ENCODE measurements at regions of chr2 and their contacts with region 1.

Region 1: GRCh38 chr2:16525265-16525887 is 140.3 kb downstream of the CYRIA start:
- DNase-seq: peak; percentile 37
- H3K4me3 ChIP-seq: peak overlapping the region in 1 of 2 experiments; percentile 40; a peak in 1 of 4 replicates
- H3K27ac ChIP-seq: no peak overlapping the region
- H3K4me1 ChIP-seq: peaks cover 0 to 22% of the 10 kb centered on the region in 2 experiments; a peak in 2 of 4 replicates
- H3K27me3 ChIP-seq: no peaks in the 10 kb centered on the region
- CTCF ChIP-seq: peak; percentile 44
- EP300 ChIP-seq: no peak
- RAD21 ChIP-seq: peak; percentile 59

Region 2: GRCh38 chr2:16487686-16488085 is 37.7 kb before region 1 on chr2:
- CTCF ChIA-PET with region 1: no interaction called
- POLR2A ChIA-PET with region 1: no interaction called
- DNase-seq: peak; percentile 73
- H3K4me3 ChIP-seq: no peak overlapping the region
- H3K27ac ChIP-seq: no peak overlapping the region
- H3K4me1 ChIP-seq: no peaks in the 10 kb centered on the region
- H3K27me3 ChIP-seq: no peaks in the 10 kb centered on the region
- CTCF ChIP-seq: no peak; the same call in 1 of the 2 replicates
- EP300 ChIP-seq: no peak
- RAD21 ChIP-seq: peak; percentile 99

Region 3: GRCh38 chr2:16537347-16537746 is 12.0 kb after region 1 on chr2:
- CTCF ChIA-PET with region 1: interaction called, 14 read pairs
- POLR2A ChIA-PET with region 1: interaction called, 3 read pairs
- DNase-seq: no peak
- H3K4me3 ChIP-seq: no peak overlapping the region
- H3K27ac ChIP-seq: no peak overlapping the region
- H3K4me1 ChIP-seq: peaks cover 0 to 2% of the 10 kb centered on the region in 2 experiments; a peak in 2 of 4 replicates
- H3K27me3 ChIP-seq: no peaks in the 10 kb centered on the region
- CTCF ChIP-seq: no peak
- EP300 ChIP-seq: no peak
- RAD21 ChIP-seq: no peak

Measured in SK-N-SH (cell line).